Dendritic cell treated with granulocyte-macrophage colony-stimulating factor and Interleukin-4, amounts not matched to agents 40 ng/mL and 50 ng/mL, for 4 days (primary cell): ENCODE measurements at regions of chr1 and their contacts with region 1.

Region 1: GRCh38 chr1:84433258-84434080 is 35.2 kb downstream of the DNASE2B start:
- H3K4me3 Mint-ChIP-seq: peak overlapping the region; percentile 37
- H3K27ac Mint-ChIP-seq: peak overlapping the region; percentile 71
- H3K4me1 Mint-ChIP-seq: peaks cover 30% of the 10 kb centered on the region
- H3K27me3 Mint-ChIP-seq: no peaks in the 10 kb centered on the region

Region 2: GRCh38 chr1:83931658-83932253 is 501.7 kb before region 1 on chr1:
- intact Hi-C with region 1: loop called (anchors 10 kb)
- H3K4me3 Mint-ChIP-seq: no peak overlapping the region
- H3K27ac Mint-ChIP-seq: no peak overlapping the region
- H3K4me1 Mint-ChIP-seq: peaks cover 5% of the 10 kb centered on the region
- H3K27me3 Mint-ChIP-seq: no peaks in the 10 kb centered on the region

Region 3: DNA sequence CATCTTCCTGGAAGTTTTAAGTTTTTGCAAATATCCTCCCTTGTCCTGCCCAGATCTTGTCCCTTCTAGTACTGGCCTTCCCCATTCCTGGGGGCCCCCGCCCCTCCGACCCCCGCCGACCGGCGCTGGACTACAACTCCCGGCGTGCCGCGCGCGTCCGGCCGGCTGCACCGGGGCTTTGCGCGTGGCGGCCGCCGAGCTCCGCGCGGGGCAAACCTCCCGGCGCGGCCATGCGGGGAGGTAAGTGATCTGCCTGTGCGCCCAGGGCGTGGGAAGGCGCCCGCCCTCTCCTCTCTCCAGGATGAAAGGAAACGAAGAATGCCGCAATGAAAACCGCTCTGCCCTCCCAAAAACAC is 135.2 kb before region 1 on chr1:
- intact Hi-C with region 1: loop called (anchors 5 kb)
- H3K4me3 Mint-ChIP-seq: peak overlapping the region; percentile 93
- H3K27ac Mint-ChIP-seq: peak overlapping the region; percentile 89
- H3K4me1 Mint-ChIP-seq: peaks cover 21% of the 10 kb centered on the region
- H3K27me3 Mint-ChIP-seq: no peaks in the 10 kb centered on the region

Region 4: DNA sequence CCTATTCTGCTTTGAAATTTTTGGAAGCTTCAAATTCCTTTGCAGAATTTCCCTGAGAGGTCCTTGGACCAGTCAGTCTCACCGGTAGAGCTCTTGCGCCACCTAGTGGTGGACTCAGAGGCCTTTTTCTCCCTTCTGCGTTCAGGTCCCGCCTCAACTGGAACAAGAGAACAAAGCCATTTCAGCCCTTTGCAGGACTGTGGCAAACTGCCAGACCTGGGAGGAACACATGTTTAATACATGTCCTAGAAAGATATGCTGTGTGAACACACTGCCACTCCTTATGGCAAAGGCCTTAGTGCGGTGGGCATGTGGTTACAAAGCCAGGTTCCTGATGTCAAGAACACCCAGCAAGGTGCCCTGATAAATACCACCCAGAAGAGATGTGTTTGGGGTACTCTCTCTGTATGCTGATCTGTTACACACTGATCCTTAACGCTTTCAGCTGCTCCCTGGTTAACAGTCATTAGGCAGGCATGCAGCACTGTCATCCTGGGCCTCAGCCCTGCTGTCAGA is 339.0 kb after region 1 on chr1:
- intact Hi-C with region 1: loop called (anchors 5 kb)
- H3K4me3 Mint-ChIP-seq: no peak overlapping the region
- H3K27ac Mint-ChIP-seq: no peak overlapping the region
- H3K4me1 Mint-ChIP-seq: no peaks in the 10 kb centered on the region
- H3K27me3 Mint-ChIP-seq: peaks cover 1% of the 10 kb centered on the region

Region 5: GRCh38 chr1:84936116-84936810 is 502.8 kb after region 1 on chr1:
- intact Hi-C with region 1: loop called (anchors 10 kb)
- H3K4me3 Mint-ChIP-seq: no peak overlapping the region
- H3K27ac Mint-ChIP-seq: no peak overlapping the region
- H3K4me1 Mint-ChIP-seq: no peaks in the 10 kb centered on the region
- H3K27me3 Mint-ChIP-seq: no peaks in the 10 kb centered on the region